Tibial artery (tissue), 4 donors: ENCODE measurements at regions of chr7 and their contacts with region 1.

Region 1: DNA sequence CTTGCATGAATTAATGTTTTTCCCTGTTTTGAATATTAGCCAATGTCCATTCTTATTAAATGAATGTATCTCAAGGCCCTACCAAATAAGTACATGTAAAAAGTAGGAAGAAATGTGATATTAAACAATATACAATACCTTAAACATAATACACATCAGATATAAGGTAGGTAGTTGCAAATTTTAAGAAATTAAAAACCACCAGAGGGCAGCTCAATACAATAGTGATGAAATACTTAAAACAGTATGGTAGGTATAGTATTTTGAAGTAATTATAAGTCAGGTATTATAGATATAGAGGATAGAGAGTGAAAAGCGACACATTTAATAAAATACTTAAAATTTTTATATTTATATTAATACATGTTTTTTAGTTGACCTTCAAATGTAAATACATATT is 43.6 kb upstream of the CDK14 start:
- DNase-seq: no peak
- H3K4me3 ChIP-seq: no peak overlapping the region
- H3K27ac ChIP-seq: no peak overlapping the region
- H3K4me1 ChIP-seq: no peaks in the 10 kb centered on the region
- H3K27me3 ChIP-seq: no peaks in the 10 kb centered on the region
- CTCF ChIP-seq: peak; percentile 29 to 37

Region 2: DNA sequence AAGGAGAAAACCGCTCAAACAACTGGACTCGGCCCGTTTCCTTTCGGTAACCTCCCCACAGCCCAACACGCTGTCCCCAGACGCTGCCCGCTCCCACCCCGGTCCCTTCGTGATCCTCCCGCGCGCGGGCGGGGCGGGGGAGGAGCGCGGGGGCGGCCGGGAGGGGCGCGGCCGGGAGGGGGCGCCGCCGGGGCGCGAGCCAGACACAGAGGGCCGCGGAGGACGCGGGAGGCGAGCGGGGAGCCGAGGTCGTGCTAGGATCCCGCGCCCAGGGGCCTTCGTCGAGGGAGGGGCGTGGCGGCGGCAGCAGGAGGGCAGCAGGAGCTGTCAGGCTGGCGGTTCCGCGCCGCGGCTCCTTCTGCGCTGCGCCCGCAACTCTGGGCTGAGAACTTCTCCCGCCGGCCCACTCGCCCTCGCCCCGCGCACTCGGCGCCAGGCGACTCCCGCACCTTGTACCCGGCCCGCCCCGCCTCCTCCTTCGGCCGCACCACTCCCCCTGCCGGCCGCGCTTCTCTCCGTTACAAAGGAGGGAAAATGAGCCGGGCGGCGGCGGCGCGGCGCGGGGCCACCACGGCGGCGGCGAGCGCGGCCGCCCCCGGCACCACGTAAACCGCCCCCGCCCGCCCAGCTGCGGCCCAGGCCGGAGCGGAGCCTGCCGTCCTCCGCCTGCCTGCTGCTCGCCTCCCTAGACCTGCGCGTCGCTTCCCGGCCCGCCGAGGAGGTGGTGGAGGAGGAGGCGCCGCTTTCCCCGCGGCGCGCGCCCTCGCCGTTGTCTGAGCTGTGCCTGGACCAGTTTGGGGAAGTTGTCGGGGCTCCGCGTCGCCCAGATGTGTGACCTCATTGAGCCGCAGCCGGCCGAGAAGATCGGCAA is 43.5 kb after region 1 on chr7 and contains the start of gene CDK14:
- intact Hi-C with region 1: loop called (anchors 1 kb)
- DNase-seq: peak; percentile 75 to 86
- H3K4me3 ChIP-seq: peak within 1 kb of the TSS; percentile 67 to 91
- H3K27ac ChIP-seq: peak within 1 kb of the TSS; percentile 91 to 95
- H3K4me1 ChIP-seq: peaks cover 0 to 45% (median 7%) of the 10 kb centered on the region in 4 donors
- H3K27me3 ChIP-seq: no peaks in the 10 kb centered on the region
- CTCF ChIP-seq: peak; percentile 21 to 63

Region 3: GRCh38 chr7:90857603-90858002 is 305.1 kb after region 1 on chr7:
- intact Hi-C with region 1: no loop called
- DNase-seq: no peak
- H3K4me3 ChIP-seq: no peak overlapping the region
- H3K27ac ChIP-seq: no peak overlapping the region
- H3K4me1 ChIP-seq: peaks cover 0 to 6% (median 0%) of the 10 kb centered on the region in 4 donors
- H3K27me3 ChIP-seq: no peaks in the 10 kb centered on the region
- CTCF ChIP-seq: no peak

Region 4: DNA sequence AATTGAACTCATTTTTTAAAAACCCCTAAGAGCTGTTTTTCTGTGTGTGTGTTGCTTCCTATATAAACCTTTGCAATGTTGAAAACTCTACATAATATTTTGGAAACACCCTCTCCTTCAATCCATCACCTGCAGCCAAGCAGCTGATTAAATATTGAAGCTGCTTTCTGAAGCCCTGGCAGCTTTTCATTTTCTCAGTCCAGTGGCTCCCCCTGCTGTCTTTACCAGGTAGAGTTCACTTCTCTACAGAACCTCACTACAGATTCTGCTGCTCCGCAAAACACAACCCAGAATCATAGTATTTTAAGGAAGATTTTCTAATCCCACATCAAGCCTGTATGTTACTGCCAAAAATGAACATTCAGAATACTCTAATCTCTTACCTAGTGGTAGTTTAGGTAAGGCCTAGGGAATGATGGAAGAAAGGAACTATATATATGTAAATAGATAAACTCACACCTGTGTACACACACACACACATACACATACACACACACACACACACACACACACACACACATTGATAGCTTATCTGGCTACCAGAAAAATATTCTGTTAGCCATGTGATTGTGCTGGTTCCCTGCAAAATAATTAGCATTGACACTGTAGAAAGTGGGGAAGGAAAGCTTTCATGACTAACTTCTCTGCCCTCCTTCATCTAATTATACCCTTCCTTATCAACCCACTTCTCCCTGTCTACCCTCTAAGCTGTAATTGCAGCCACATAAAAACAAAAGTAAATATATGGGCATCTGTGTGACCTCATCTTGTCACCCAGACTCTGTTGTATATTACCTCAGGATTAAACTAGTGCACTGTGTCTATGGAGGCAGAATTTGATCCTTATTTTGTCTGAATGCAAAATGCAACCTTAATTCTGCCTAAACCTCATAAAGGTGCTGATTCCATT is 482.2 kb after region 1 on chr7:
- intact Hi-C with region 1: loop called (anchors 5 kb)
- DNase-seq: peak; percentile 60 to 65
- H3K4me3 ChIP-seq: no peak overlapping the region
- H3K27ac ChIP-seq: peak overlapping the region in 1 of 2 donors; percentile 6
- H3K4me1 ChIP-seq: peaks cover 0 to 18% (median 9%) of the 10 kb centered on the region in 4 donors
- H3K27me3 ChIP-seq: no peaks in the 10 kb centered on the region
- CTCF ChIP-seq: peak; percentile 64 to 73